Activated naive CD4-positive, alpha-beta T cell treated with anti-CD3 and anti-CD28 coated beads for 36 hours (primary cell): ENCODE measurements at regions of chr10 and their contacts with region 1.

Region 1: GRCh38 chr10:89086801-89087521 is 96.4 kb downstream of the FAS start:
- DNase-seq: peak; percentile 20
- H3K4me3 Mint-ChIP-seq: no peak overlapping the region
- H3K27ac Mint-ChIP-seq: no peak overlapping the region
- H3K4me1 Mint-ChIP-seq: peaks cover 5% of the 10 kb centered on the region
- H3K27me3 Mint-ChIP-seq: no peaks in the 10 kb centered on the region

Region 2: DNA sequence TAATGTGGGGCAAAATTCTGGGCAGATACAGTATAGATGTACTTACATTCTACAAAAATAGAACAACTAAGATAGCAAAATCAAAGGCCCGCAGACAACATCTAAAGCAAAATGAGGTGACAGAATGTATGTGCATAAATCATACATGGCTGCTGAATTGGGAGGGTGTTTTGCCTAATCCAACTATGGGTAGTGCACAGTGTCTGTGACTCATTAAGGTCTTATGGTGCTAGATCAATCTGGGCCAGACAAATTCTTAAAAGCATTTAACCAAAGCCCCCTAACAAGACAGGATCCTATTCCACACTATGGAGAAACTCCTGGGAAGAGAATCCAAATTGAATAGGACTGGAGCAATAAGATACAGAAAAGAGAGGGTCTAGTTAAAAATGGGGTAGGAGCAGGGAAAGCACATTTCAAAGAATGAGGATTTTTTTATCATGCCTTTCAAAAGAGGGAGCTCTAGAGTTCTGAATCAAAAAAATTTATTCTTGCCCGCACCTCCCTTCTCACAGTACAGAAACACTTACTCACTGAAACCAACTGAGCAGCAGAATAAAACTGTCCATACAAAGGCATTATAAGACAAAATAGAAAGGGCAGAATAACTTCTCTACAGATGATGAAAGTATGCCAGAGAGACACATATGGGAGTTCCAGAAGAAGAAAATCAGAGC is 685.2 kb before region 1 on chr10:
- CTCF ChIA-PET with region 1: no interaction called
- intact Hi-C with region 1: loop called (anchors 10 kb)
- DNase-seq: no peak
- H3K4me3 Mint-ChIP-seq: no peak overlapping the region
- H3K27ac Mint-ChIP-seq: no peak overlapping the region
- H3K4me1 Mint-ChIP-seq: peaks cover 4% of the 10 kb centered on the region
- H3K27me3 Mint-ChIP-seq: no peaks in the 10 kb centered on the region

Region 3: DNA sequence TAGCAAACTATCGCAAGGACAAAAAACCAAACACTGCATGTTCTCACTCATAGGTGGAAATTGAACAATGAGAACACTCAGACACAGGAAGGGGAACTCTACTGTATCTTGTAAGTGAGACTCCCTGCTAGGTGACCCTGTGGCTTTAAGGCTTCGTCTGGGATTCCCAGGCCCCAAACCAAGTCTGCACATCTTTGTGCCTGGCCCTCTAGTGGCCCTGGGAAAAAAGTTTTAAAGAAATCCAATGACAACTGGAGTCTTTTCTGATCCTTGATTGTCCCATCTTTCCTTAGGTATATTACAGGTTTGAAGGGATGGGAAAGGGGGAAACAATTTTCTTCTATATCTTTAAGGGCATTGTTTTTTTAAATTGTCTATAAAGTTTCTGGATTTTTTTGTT is 295.0 kb before region 1 on chr10:
- CTCF ChIA-PET with region 1: no interaction called
- intact Hi-C with region 1: loop called (anchors 1 kb)
- DNase-seq: peak; percentile 25
- H3K4me3 Mint-ChIP-seq: no peak overlapping the region
- H3K27ac Mint-ChIP-seq: no peak overlapping the region
- H3K4me1 Mint-ChIP-seq: peaks cover 19% of the 10 kb centered on the region
- H3K27me3 Mint-ChIP-seq: peaks cover 4% of the 10 kb centered on the region

Region 4: GRCh38 chr10:88848499-88848898 is 238.5 kb before region 1 on chr10:
- CTCF ChIA-PET with region 1: no interaction called
- intact Hi-C with region 1: loop called (anchors 1 kb)
- DNase-seq: no peak
- H3K4me3 Mint-ChIP-seq: no peak overlapping the region
- H3K27ac Mint-ChIP-seq: peak overlapping the region; percentile 25
- H3K4me1 Mint-ChIP-seq: peaks cover 13% of the 10 kb centered on the region
- H3K27me3 Mint-ChIP-seq: peaks cover 12% of the 10 kb centered on the region

Region 5: GRCh38 chr10:89007129-89007893 is 79.7 kb before region 1 on chr10:
- CTCF ChIA-PET with region 1: no interaction called
- intact Hi-C with region 1: no loop called
- DNase-seq: no peak
- H3K4me3 Mint-ChIP-seq: no peak overlapping the region
- H3K27ac Mint-ChIP-seq: no peak overlapping the region
- H3K4me1 Mint-ChIP-seq: peaks cover 17% of the 10 kb centered on the region
- H3K27me3 Mint-ChIP-seq: no peaks in the 10 kb centered on the region

Region 6: GRCh38 chr10:89029785-89030437 is 57.0 kb before region 1 on chr10:
- CTCF ChIA-PET with region 1: interaction called, 7 read pairs
- intact Hi-C with region 1: loop called (anchors 1 kb)
- DNase-seq: peak; percentile 85
- H3K4me3 Mint-ChIP-seq: no peak overlapping the region
- H3K27ac Mint-ChIP-seq: no peak overlapping the region
- H3K4me1 Mint-ChIP-seq: peaks cover 22% of the 10 kb centered on the region
- H3K27me3 Mint-ChIP-seq: no peaks in the 10 kb centered on the region

Region 7: DNA sequence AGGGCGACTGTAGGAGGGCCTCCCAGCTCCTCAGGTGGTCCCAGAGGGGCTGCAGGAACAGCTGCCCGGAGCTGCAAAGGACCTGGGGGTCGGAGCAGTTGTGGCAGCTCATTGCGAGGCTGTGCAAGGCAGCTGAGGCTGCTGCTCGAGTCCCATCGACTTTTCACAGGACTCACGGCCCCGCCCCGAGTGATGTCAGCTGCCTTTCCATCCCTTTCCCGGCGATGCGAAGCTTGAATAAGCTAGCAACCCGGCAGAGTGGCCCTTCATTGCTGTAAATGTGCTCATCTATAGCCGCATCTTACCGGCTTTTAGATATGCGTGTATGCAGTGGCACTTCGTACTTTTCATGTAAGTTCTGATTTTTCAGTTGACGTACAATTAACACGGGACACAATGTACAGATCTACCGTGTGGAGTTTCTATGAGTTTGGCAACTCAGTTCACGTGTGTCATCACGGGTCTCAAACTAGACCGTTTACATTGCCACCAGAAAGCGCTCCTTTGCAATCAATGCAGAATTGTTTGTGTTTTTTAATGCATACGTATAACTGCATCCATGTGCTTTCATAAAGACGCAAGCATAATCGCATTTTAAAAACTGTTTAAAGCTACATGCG is 120.3 kb after region 1 on chr10 and contains the start of gene CH25H:
- CTCF ChIA-PET with region 1: interaction called, 4 read pairs
- intact Hi-C with region 1: loop called (anchors 1 kb)
- DNase-seq: peak; percentile 79
- H3K4me3 Mint-ChIP-seq: peak within 1 kb of the TSS; percentile 75
- H3K27ac Mint-ChIP-seq: no peak within 1 kb of the TSS
- H3K4me1 Mint-ChIP-seq: peaks cover 7% of the 10 kb centered on the region
- H3K27me3 Mint-ChIP-seq: peaks cover 39% of the 10 kb centered on the region
- total RNA-seq, gene CH25H: 0.12 to 0.22 TPM

Region 8: DNA sequence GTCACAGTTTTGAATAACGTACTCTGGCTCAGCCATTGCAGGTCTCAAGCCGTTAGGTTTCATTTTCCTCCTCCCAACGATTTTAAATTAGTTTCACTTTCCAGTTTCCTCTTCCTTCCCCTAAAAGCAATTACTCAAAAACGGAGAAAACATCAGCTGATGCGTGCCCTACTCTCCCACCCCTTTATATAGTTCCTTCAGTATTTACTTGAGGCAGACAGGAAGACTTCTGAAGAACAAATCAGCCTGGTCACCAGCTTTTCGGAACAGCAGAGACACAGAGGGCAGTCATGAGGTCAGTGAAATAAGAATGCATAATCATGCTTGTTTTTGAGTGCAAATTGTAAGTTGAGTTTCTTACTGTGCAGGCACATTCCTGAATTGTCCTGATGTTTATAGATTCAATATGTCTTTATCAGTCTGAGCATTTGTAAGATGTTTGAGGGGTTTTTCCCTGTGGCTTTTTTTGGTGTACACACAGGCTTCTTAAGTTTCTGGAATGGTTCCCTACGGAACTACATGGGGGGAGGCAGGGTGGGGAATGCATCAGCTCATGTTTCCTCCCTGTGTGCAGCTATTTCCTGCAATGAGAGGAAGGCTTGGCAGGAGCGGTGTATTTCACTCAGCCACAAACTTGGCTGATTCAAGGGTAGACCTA is 241.0 kb after region 1 on chr10 and contains the start of gene IFIT3:
- CTCF ChIA-PET with region 1: no interaction called
- intact Hi-C with region 1: loop called (anchors 1 kb)
- DNase-seq: peak; percentile 39
- H3K4me3 Mint-ChIP-seq: peak within 1 kb of the TSS; percentile 67
- H3K27ac Mint-ChIP-seq: peak within 1 kb of the TSS; percentile 17
- H3K4me1 Mint-ChIP-seq: peaks cover 39% of the 10 kb centered on the region
- H3K27me3 Mint-ChIP-seq: peaks cover 2% of the 10 kb centered on the region
- total RNA-seq, gene IFIT3: 13.9 to 14.4 TPM